IMR-90 (cell line): ENCODE measurements at regions of chr1 and their contacts with region 1.

Region 1: DNA sequence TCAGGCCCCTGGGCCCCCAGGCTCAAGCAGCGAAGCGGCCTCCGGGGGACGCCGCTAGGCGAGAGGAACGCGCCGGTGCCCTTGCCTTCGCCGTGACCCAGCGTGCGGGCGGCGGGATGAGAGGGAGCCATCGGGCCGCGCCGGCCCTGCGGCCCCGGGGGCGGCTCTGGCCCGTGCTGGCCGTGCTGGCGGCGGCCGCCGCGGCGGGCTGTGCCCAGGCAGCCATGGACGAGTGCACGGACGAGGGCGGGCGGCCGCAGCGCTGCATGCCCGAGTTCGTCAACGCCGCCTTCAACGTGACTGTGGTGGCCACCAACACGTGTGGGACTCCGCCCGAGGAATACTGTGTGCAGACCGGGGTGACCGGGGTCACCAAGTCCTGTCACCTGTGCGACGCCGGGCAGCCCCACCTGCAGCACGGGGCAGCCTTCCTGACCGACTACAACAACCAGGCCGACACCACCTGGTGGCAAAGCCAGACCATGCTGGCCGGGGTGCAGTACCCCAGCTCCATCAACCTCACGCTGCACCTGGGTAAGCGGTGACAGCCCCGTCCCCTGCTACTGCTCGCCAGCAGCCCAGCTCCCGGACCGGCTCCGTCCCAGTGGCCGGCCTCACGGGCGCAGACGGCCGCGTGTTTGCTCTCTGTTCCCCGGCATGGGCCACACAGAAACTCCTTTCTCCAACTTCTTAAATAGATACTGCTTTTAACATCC is 539 bp downstream of the LAMC1 start:
- DNase-seq: peak; percentile 47
- ATAC-seq: peak; percentile 31
- H3K4me3 ChIP-seq: peak overlapping the region; percentile 84
- H3K27ac ChIP-seq: peak overlapping the region; percentile 56
- H3K4me1 ChIP-seq: peaks cover 4% of the 10 kb centered on the region
- H3K27me3 ChIP-seq: no peaks in the 10 kb centered on the region
- CTCF ChIP-seq: peak; percentile 40
- POLR2A ChIP-seq: no peak; the same call in 1 of the 2 replicates
- RAD21 ChIP-seq: peak; percentile 40

Region 2: GRCh38 chr1:182955596-182956588 is 67.9 kb before region 1 on chr1:
- CTCF ChIA-PET with region 1: no interaction called
- POLR2A ChIA-PET with region 1: no interaction called
- dilution Hi-C with region 1: no loop called
- in situ Hi-C with region 1: loop called (anchors 5 kb)
- intact Hi-C with region 1: no loop called
- DNase-seq: peak; percentile 92
- ATAC-seq: peak; percentile 94
- H3K4me3 ChIP-seq: no peak overlapping the region
- H3K27ac ChIP-seq: no peak overlapping the region
- H3K4me1 ChIP-seq: peaks cover 2% of the 10 kb centered on the region; the same call in 1 of the 2 replicates
- H3K27me3 ChIP-seq: peaks cover 12% of the 10 kb centered on the region
- CTCF ChIP-seq: no peak
- POLR2A ChIP-seq: no peak
- RAD21 ChIP-seq: no peak

Region 3: GRCh38 chr1:183101841-183102276 is 78.1 kb after region 1 on chr1:
- CTCF ChIA-PET with region 1: interaction called, 4 read pairs
- POLR2A ChIA-PET with region 1: no interaction called
- dilution Hi-C with region 1: no loop called
- in situ Hi-C with region 1: no loop called
- intact Hi-C with region 1: loop called (anchors 2 kb)
- DNase-seq: no peak
- ATAC-seq: no peak
- H3K4me3 ChIP-seq: no peak overlapping the region
- H3K27ac ChIP-seq: no peak overlapping the region
- H3K4me1 ChIP-seq: peaks cover 33% of the 10 kb centered on the region
- H3K27me3 ChIP-seq: no peaks in the 10 kb centered on the region
- CTCF ChIP-seq: no peak
- POLR2A ChIP-seq: no peak
- RAD21 ChIP-seq: no peak

Region 4: GRCh38 chr1:183234660-183235476 is 211.1 kb after region 1 on chr1:
- CTCF ChIA-PET with region 1: no interaction called
- POLR2A ChIA-PET with region 1: no interaction called
- dilution Hi-C with region 1: no loop called
- in situ Hi-C with region 1: loop called (anchors 10 kb)
- intact Hi-C with region 1: loop called (anchors 2 kb)
- DNase-seq: peak; percentile 98
- ATAC-seq: peak; percentile 89
- H3K4me3 ChIP-seq: peak overlapping the region; percentile 41
- H3K27ac ChIP-seq: peak overlapping the region; percentile 76
- H3K4me1 ChIP-seq: peaks cover 13% of the 10 kb centered on the region
- H3K27me3 ChIP-seq: no peaks in the 10 kb centered on the region
- CTCF ChIP-seq: peak; percentile 74
- POLR2A ChIP-seq: peak; percentile 54; the same call in 1 of the 2 replicates
- RAD21 ChIP-seq: peak; percentile 47

Region 5: DNA sequence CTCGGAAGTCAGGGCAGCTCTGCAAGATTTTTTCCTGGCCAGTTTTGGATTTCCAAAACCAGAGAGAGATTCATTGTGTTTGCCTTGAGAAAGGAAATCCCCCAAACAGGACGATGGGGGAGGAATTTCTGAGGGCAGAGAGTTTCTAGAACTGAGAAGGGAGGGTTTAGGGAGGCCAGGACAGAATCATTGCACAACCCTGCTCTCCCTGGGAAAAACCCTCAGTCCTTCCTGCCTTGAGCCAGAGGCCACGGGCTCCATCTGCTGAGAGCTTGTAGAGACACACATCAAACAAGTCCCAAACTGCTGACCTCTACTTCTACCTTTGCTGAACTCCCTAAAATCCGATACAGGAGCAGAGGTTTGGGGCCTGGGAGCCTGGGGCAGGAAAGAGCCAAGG is 294.7 kb after region 1 on chr1:
- CTCF ChIA-PET with region 1: no interaction called
- POLR2A ChIA-PET with region 1: no interaction called
- dilution Hi-C with region 1: no loop called
- in situ Hi-C with region 1: no loop called
- intact Hi-C with region 1: loop called (anchors 2 kb)
- DNase-seq: peak; percentile 95
- ATAC-seq: peak; percentile 97
- H3K4me3 ChIP-seq: no peak overlapping the region
- H3K27ac ChIP-seq: peak overlapping the region; percentile 20; the same call in 1 of the 2 replicates
- H3K4me1 ChIP-seq: peaks cover 10% of the 10 kb centered on the region
- H3K27me3 ChIP-seq: peaks cover 2% of the 10 kb centered on the region; the same call in 1 of the 2 replicates
- CTCF ChIP-seq: peak; percentile 81
- POLR2A ChIP-seq: no peak
- RAD21 ChIP-seq: peak; percentile 85